ENCODE measurements at regions of chr2 and their contacts with region 1.

Region 1: GRCh38 chr2:219294356-219295351 is 14.5 kb downstream of the PTPRN start:
- DNase-seq: peak; percentile 94
- H3K4me3 ChIP-seq: peak overlapping the region; percentile 61 to 73 (median 66)
- H3K27ac ChIP-seq: peak overlapping the region; percentile 80 to 90 (median 86)
- H3K4me1 ChIP-seq: peaks cover 5 to 33% (median 28%) of the 10 kb centered on the region in 4 donors
- H3K27me3 ChIP-seq: peaks cover 0 to 7% (median 0%) of the 10 kb centered on the region in 4 donors
- CTCF ChIP-seq: peak; percentile 99 to 100 (median 99)
- EP300 ChIP-seq: no peak
- POLR2A ChIP-seq: no peak

Region 2: DNA sequence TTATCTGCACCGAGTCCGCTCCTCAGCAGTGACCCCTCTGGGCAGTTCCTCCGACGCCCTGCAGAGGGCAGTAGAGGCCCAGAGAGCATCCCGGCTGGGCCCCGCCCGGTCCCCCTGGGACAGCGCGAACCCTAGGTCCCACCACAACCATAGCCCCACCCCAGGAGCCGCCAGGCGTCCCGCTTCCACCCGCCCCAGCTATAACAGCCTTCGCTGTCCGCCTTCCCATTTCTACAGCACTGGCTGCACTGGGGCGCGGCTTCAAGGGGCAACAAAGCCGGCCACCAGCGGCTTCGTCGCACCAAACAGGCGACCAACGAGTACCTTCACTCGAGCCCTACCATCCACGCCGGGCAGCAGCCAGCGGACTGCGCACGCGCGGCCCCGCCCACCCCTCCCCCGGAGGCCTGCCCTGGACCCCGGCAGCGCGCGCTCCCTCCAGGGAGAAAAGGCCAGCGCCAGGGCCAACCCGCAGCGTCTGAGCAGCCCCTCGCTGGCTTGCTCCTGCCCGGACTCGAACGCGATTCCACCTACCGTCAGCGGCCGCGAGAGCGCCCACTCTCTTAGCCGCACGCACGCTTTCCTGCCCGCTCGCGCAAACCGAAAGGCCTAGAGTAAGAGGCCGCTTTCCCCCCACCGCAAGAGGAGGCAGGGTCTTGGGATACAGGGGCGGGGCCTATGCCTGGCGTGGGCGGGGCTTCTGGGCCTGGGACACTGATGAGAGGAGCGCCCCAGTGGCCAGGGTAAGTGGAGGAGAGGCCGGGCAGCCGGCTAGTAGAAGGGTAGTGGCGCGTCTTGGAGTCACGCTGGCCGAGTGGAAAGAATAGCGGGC is 134.3 kb before region 1 on chr2 and contains the start of gene NHEJ1:
- intact Hi-C with region 1: loop called (anchors 1 kb)
- DNase-seq: peak; percentile 99
- H3K4me3 ChIP-seq: peak within 1 kb of the TSS; percentile 74 to 92 (median 82)
- H3K27ac ChIP-seq: peak within 1 kb of the TSS; percentile 93 to 97 (median 94)
- H3K4me1 ChIP-seq: peaks cover 9 to 15% (median 14%) of the 10 kb centered on the region in 4 donors
- H3K27me3 ChIP-seq: no peaks in the 10 kb centered on the region
- CTCF ChIP-seq: peak in 2 of 3 experiments; percentile 99
- EP300 ChIP-seq: no peak
- POLR2A ChIP-seq: peak; percentile 4
- total RNA-seq, gene NHEJ1: 15.1 to 24.4 (median 17.8) TPM

Region 3: GRCh38 chr2:219245148-219245898 is 49.3 kb before region 1 on chr2 and contains the starts of genes GLB1L and STK16:
- intact Hi-C with region 1: loop called (anchors 10 kb)
- DNase-seq: peak; percentile 99
- H3K4me3 ChIP-seq: peak within 1 kb of the TSS; percentile 64 to 97 (median 70)
- H3K27ac ChIP-seq: peak within 1 kb of the TSS; percentile 88 to 94 (median 90)
- H3K4me1 ChIP-seq: peaks cover 41 to 57% (median 50%) of the 10 kb centered on the region in 4 donors
- H3K27me3 ChIP-seq: no peaks in the 10 kb centered on the region
- CTCF ChIP-seq: no peak
- EP300 ChIP-seq: no peak
- POLR2A ChIP-seq: peak; percentile 79
- total RNA-seq, gene GLB1L: 3.3 to 6.4 (median 5.6) TPM
- total RNA-seq, gene STK16: 12.8 to 21.6 (median 16.7) TPM

Region 4: DNA sequence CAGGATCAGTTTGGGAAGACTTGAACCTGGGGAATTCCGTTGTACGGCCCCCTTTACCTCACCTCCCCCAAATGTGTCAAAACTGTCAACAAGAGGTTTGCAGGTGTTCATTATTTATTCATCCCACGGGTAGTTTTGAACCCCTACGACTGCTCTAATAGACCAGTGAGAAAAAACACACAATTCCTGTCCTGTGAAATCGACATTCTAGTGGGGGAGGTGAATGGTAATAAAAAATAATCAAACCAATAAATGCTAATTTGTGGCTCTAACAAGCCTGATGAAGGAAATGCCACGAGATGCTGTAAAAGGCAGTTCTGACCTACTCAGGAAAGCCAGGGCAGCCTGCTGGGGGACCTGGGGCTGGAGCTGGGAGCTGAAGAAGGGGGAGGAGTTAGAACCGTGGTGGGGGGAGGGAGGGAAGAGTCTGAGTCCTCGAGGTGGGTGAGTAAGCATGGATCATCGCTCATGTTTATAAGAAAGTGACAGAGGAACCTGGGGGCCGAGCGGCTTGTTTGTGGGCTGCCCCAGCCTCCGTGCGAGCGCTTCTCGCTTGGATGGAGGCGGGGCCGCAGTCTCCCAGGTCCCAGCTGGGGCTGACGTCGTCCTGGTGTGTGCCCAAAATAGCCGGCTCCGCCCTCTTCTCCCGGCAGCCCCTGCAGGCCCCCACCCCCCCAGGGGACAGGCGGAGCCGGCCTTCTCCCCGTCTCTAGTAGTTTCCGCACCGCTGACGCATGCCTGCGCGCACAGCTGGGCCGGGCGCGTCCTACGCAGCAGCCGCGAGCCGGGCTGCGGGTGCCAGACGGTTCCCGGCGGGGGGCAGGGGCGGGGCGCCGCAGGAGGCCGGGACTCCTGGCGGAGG is 15.8 kb before region 1 on chr2 and contains the start of gene DNAJB2:
- intact Hi-C with region 1: loop called (anchors 1 kb)
- DNase-seq: peak; percentile 99
- H3K4me3 ChIP-seq: peak within 1 kb of the TSS; percentile 74 to 89 (median 85)
- H3K27ac ChIP-seq: peak within 1 kb of the TSS; percentile 96 to 98 (median 98)
- H3K4me1 ChIP-seq: peaks cover 37 to 59% (median 55%) of the 10 kb centered on the region in 4 donors
- H3K27me3 ChIP-seq: no peaks in the 10 kb centered on the region
- CTCF ChIP-seq: peak in 1 of 3 experiments; percentile 10
- EP300 ChIP-seq: peak; percentile 57
- POLR2A ChIP-seq: no peak
- total RNA-seq, gene DNAJB2: 33.3 to 84.8 (median 50.7) TPM

Region 5: DNA sequence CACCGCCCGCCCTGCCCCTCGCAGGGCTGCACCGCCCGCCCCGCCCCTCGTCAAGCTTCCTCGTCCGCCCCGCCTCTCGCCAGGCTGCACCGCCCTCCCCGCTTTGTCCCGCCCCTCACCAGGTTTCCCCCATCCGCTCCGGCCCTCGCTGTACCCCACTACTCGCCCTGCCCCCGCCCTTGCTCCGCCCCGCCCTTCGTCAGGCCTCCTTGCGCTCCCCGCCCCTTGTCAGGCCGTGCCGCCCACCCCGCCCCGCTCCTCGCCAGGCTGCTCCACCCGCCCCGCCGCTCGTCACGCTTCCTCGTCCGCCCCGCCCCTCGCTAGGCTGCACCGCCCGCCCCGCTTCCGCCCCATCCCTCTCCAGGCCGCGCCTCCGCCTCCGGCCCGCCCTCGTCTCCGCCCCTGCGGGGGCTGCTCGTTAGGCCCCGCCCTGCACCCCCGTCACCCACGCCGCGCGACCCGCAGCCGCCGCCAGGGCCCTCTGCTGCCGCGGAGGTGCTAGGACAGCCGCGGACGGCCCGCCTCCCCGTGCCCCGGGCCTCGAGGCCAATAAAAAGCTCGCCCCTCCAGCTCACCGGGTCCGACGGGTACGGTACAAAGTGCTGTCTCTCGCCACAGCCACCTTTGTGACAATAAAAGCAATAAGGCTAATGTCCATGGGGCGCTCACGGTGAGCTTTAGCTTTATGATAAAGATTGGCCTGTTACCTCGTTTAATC is 93.6 kb after region 1 on chr2:
- intact Hi-C with region 1: loop called (anchors 5 kb)
- DNase-seq: peak; percentile 99
- H3K4me3 ChIP-seq: peak overlapping the region; percentile 67 to 96 (median 82)
- H3K27ac ChIP-seq: peak overlapping the region; percentile 82 to 93 (median 89)
- H3K4me1 ChIP-seq: peaks cover 26 to 38% (median 30%) of the 10 kb centered on the region in 4 donors
- H3K27me3 ChIP-seq: no peaks in the 10 kb centered on the region
- CTCF ChIP-seq: peak; percentile 59 to 92 (median 87)
- EP300 ChIP-seq: no peak
- POLR2A ChIP-seq: no peak

Region 6: GRCh38 chr2:219484343-219485200 is 189.9 kb after region 1 on chr2:
- intact Hi-C with region 1: no loop called
- DNase-seq: no peak
- H3K4me3 ChIP-seq: peak overlapping the region; percentile 31 to 45 (median 36)
- H3K27ac ChIP-seq: peak overlapping the region; percentile 40 to 72 (median 58)
- H3K4me1 ChIP-seq: peaks cover 14 to 32% (median 29%) of the 10 kb centered on the region in 4 donors
- H3K27me3 ChIP-seq: peaks cover 0 to 45% (median 9%) of the 10 kb centered on the region in 4 donors
- CTCF ChIP-seq: no peak
- EP300 ChIP-seq: no peak
- POLR2A ChIP-seq: no peak

Region 7: GRCh38 chr2:219701847-219702634 is 407.4 kb after region 1 on chr2:
- intact Hi-C with region 1: no loop called
- DNase-seq: no peak
- H3K4me3 ChIP-seq: no peak overlapping the region
- H3K27ac ChIP-seq: no peak overlapping the region
- H3K4me1 ChIP-seq: peaks cover 7 to 19% (median 10%) of the 10 kb centered on the region in 4 donors
- H3K27me3 ChIP-seq: peaks cover 0 to 8% (median 0%) of the 10 kb centered on the region in 4 donors
- CTCF ChIP-seq: no peak
- EP300 ChIP-seq: no peak
- POLR2A ChIP-seq: no peak

Measured in esophagus muscularis mucosa (tissue), 4 donors.